ENCODE measurements at regions of chr11 and their contacts with region 1.

Region 1: DNA sequence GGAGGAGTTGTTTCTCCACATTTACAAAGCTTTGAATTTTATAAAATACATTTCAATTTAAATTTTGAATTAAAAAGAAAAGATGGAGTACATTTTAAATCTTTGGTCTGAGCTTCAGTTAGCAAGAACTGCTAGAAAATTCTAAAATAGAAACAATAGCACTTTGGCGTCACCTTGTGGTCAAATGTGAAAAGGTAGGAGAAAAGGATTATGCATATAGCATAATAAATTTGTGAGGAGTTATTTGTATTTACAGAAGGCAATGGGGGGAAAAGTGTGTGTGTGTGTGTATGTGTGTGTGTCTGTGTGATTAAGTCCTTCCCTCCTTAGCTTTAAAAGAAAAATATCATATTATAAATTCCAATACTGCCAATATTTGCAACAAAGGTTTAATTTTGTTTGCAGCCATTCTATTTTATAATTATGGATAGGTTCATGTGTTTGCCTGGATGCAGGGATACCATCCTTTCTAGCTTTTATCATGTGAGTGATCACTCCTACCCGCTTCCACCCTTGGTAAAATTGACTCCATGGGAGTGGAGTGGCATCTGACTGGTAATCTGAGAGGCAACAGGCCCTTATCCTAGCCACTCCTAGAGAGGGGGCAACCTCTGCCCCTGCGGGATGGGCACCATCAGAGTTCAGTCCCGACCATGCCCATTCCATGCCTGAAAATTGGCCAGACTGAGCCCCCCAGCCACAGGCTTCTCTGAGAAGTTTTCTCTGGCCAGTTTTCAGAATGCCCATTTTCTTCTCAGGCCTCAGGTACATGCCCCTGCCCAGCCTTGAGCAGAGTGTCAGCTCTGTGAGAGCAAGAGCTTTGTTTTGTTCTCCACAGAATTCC is 13.6 kb upstream of the LGR4 start:
- H3K4me3 ChIP-seq: no peak overlapping the region
- H3K27ac ChIP-seq: no peak overlapping the region
- H3K4me1 ChIP-seq: no peaks in the 10 kb centered on the region
- CTCF ChIP-seq: peak; percentile 55

Region 2: DNA sequence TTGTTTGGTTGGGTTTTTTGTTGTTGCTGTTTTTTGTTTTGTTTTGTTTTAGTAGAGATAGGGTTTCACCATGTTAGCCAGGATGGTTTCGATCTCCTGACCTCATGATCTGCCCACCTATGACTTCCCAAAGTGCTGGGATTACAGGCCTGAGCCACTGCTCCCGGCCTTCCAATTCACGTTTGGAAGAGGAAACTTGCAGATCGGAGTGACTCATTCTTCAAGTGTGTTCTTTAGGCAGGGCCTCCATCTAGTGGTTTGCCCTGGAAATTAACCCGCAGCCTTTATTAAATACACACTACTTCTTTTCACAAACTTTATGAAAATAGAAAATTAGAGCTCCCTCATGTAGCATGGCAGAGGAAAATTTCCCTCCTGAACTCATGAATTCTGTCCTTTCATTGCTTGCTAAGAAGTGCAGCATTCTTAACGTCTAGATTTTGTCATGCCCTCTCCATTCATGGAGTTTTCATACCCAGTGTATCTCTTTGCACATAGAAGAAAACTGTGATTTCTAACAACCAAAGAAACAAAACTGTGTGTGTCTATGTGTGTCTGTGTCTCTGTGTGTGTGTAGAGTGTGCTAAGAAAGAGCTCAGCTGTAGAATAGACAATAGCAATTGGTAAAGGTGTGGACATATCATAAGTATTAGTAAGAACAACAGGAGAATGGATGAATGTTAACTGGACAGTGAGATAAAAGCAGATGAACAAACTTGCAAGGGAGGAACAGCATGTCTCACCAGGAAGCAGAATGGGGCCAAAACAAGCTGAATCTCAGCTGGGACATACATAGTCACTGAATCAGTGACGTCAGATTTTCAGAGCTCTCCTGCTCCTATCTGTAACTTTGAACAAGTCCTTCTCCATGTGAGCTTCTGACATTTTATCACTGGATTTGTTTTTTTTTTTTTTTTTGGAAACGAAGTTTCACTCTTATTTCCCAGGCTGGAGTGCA is 327.2 kb before region 1 on chr11:
- CTCF ChIA-PET with region 1: interaction called, 32 read pairs
- POLR2A ChIA-PET with region 1: no interaction called
- H3K4me3 ChIP-seq: no peak overlapping the region
- H3K27ac ChIP-seq: peak overlapping the region; percentile 3; the same call in 1 of the 2 replicates
- H3K4me1 ChIP-seq: no peaks in the 10 kb centered on the region; the same call in 1 of the 2 replicates
- CTCF ChIP-seq: peak; percentile 39; the same call in 1 of the 2 replicates

Region 3: GRCh38 chr11:27183672-27184457 is 302.3 kb before region 1 on chr11:
- CTCF ChIA-PET with region 1: interaction called, 134 read pairs
- POLR2A ChIA-PET with region 1: interaction called, 4 read pairs
- H3K4me3 ChIP-seq: no peak overlapping the region
- H3K27ac ChIP-seq: no peak overlapping the region
- H3K4me1 ChIP-seq: no peaks in the 10 kb centered on the region
- CTCF ChIP-seq: no peak

Region 4: GRCh38 chr11:27234043-27234668 is 252.0 kb before region 1 on chr11:
- CTCF ChIA-PET with region 1: interaction called, 10 read pairs
- POLR2A ChIA-PET with region 1: no interaction called
- H3K4me3 ChIP-seq: no peak overlapping the region
- H3K27ac ChIP-seq: peak overlapping the region; percentile 88
- H3K4me1 ChIP-seq: peaks cover 20% of the 10 kb centered on the region
- CTCF ChIP-seq: peak; percentile 67

Region 5: DNA sequence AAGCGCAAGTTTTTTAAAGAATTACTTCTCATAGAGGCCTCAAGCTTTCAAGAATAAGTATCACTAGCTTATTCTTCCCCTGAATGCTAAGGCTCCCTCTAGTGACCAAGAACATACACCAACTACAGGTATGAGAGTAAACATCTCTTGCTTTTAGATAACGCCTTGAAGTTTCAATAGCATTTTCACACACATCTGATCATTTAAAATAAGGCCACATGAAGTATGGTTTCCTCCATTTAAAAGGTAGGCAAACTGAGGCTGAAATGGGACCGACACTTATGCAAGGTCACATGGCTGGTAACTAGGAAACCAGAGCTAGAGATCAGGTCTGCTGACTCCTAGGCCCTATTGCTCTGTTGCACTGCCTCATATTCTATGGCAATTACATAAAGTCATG is 189.7 kb before region 1 on chr11:
- CTCF ChIA-PET with region 1: interaction called, 37 read pairs
- POLR2A ChIA-PET with region 1: no interaction called
- H3K4me3 ChIP-seq: no peak overlapping the region
- H3K27ac ChIP-seq: no peak overlapping the region
- H3K4me1 ChIP-seq: no peaks in the 10 kb centered on the region
- CTCF ChIP-seq: no peak

Region 6: GRCh38 chr11:27370374-27370773 is 115.8 kb before region 1 on chr11:
- CTCF ChIA-PET with region 1: interaction called, 23 read pairs
- POLR2A ChIA-PET with region 1: no interaction called
- H3K4me3 ChIP-seq: no peak overlapping the region
- H3K27ac ChIP-seq: no peak overlapping the region
- H3K4me1 ChIP-seq: peaks cover 7% of the 10 kb centered on the region; the same call in 1 of the 2 replicates
- CTCF ChIP-seq: no peak

Region 7: GRCh38 chr11:27472398-27473016 is 13.6 kb before region 1 on chr11 and contains the start of gene LGR4:
- CTCF ChIA-PET with region 1: interaction called, 26 read pairs
- POLR2A ChIA-PET with region 1: interaction called, 10 read pairs
- H3K4me3 ChIP-seq: peak within 1 kb of the TSS; percentile 79
- H3K27ac ChIP-seq: peak within 1 kb of the TSS; percentile 93
- H3K4me1 ChIP-seq: no peaks in the 10 kb centered on the region
- CTCF ChIP-seq: no peak

Measured in HEK293 (cell line).